ENCODE measurements at regions of chr20 and their contacts with region 1.

Region 1: DNA sequence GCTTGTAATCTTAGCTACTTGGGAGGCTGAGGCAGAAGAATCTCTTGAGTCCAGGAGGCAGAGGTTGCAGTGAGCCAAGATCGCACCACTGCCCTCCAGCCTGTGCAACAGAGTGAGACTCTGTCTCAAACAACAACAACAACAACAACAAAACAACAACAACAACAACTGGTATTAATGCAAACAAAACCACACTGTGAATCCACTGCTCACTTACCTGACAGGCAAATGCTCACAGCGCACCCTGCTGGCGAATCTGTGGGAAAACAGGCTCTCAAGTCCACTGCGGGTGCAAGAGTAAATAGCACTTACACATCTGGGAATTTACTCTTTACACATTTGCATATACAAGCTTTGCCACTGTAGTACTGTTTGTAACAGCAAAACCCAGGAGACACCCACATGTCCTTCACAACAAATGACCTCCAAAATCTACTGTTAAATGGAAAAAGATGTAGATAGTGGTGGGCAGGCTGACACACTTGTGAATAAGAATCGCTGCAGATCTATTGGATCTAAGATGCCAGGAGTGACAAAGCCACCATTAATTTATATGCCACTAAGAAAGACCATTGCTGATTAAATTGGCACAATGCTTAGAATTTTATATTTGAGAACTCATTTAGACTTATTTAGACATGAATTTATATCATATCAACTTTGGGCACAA is 29.3 kb downstream of the NSFL1C start:
- DNase-seq: peak; percentile 71
- ATAC-seq: peak; percentile 81
- H3K4me3 ChIP-seq: no peak overlapping the region
- H3K27ac ChIP-seq: no peak overlapping the region
- H3K4me1 ChIP-seq: no peaks in the 10 kb centered on the region
- H3K27me3 ChIP-seq: no peaks in the 10 kb centered on the region
- CTCF ChIP-seq: peak; percentile 85 to 91 (median 91)
- POLR2A ChIP-seq: no peak
- RAD21 ChIP-seq: peak; percentile 92

Region 2: DNA sequence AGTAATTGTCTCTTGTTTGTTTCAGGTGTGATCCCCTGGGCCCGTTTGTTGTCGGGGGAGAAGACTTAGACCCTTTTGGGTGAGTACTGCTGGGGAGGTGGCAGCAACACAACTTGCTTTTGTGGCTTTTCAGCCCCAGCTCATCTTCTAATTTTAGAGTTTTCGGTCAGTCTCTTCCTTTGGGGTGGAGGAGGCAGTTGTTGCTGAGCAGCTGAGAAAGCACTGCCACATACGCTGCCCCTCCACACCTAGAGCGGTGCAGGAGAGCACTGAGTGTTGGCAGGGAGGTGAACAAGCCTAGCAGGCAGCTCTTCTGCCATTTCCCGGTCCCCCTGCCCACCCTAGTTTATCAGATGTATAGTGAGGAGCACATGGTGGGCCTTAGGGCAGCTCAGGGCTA is 274.3 kb before region 1 on chr20:
- CTCF ChIA-PET with region 1: no interaction called
- POLR2A ChIA-PET with region 1: no interaction called
- RAD21 ChIA-PET with region 1: no interaction called
- intact Hi-C with region 1: no loop called
- DNase-seq: no peak
- ATAC-seq: no peak
- H3K4me3 ChIP-seq: no peak overlapping the region
- H3K27ac ChIP-seq: no peak overlapping the region
- H3K4me1 ChIP-seq: no peaks in the 10 kb centered on the region
- H3K27me3 ChIP-seq: no peaks in the 10 kb centered on the region
- CTCF ChIP-seq: no peak
- POLR2A ChIP-seq: no peak
- RAD21 ChIP-seq: no peak

Region 3: GRCh38 chr20:1196634-1197033 is 240.7 kb before region 1 on chr20:
- CTCF ChIA-PET with region 1: no interaction called
- POLR2A ChIA-PET with region 1: no interaction called
- RAD21 ChIA-PET with region 1: no interaction called
- intact Hi-C with region 1: no loop called
- DNase-seq: no peak
- ATAC-seq: no peak
- H3K4me3 ChIP-seq: no peak overlapping the region
- H3K27ac ChIP-seq: no peak overlapping the region
- H3K4me1 ChIP-seq: no peaks in the 10 kb centered on the region
- H3K27me3 ChIP-seq: no peaks in the 10 kb centered on the region
- CTCF ChIP-seq: no peak
- POLR2A ChIP-seq: no peak
- RAD21 ChIP-seq: no peak

Region 4: DNA sequence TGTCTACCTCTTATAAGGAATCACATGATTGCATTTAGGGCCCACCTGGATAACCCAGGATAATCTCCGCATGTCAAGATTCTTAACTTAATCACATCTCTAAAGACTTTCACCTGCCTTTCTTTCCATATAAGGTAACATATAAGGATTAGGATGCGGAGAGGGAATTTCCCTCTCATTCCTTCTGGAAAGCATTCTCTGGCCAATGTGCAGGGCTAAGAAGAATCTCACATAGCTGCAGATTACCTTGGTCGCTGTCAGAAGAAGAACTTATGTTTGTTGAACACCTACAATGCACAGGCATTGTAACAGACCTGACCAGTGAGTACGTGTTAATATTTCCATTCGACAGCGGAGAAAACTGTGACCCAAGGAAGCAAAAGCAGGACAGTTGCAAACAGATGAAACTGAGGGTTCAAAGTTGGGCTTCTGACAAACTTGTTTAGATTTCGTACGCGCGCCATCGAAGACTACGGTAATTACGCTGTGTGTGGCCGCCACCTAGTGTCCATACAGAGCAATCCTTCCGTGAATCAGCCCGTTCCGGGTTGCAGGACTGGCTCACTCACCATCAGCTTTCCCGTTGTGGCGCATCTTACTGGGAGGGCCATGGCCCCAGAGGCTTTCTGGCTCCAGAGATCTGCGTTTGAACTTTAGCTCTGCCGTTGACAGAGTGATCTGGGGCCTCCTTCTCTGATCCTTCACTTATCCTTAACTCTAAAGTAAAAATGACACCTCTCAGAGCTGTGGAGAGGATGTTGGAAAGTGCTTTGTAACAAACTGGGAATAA is 224.6 kb before region 1 on chr20:
- CTCF ChIA-PET with region 1: no interaction called
- POLR2A ChIA-PET with region 1: no interaction called
- RAD21 ChIA-PET with region 1: interaction called in 1 of 2 experiments, 3 read pairs
- intact Hi-C with region 1: loop called (anchors 1 kb)
- DNase-seq: peak; percentile 66
- ATAC-seq: peak; percentile 99
- H3K4me3 ChIP-seq: peak overlapping the region in 1 of 2 experiments; percentile 28; a peak in 1 of 4 replicates
- H3K27ac ChIP-seq: no peak overlapping the region
- H3K4me1 ChIP-seq: peaks cover 6 to 19% of the 10 kb centered on the region in 2 experiments; a peak in 3 of 4 replicates
- H3K27me3 ChIP-seq: peaks cover 11% of the 10 kb centered on the region
- CTCF ChIP-seq: peak; percentile 71 to 79 (median 77)
- POLR2A ChIP-seq: no peak
- RAD21 ChIP-seq: peak; percentile 81

Region 5: GRCh38 chr20:1313236-1313964 is 124.0 kb before region 1 on chr20:
- CTCF ChIA-PET with region 1: interaction called, 5 read pairs
- POLR2A ChIA-PET with region 1: no interaction called
- RAD21 ChIA-PET with region 1: interaction called in 1 of 2 experiments, 3 read pairs
- intact Hi-C with region 1: loop called (anchors 1 kb)
- DNase-seq: peak; percentile 49
- ATAC-seq: peak; percentile 93
- H3K4me3 ChIP-seq: no peak overlapping the region
- H3K27ac ChIP-seq: no peak overlapping the region
- H3K4me1 ChIP-seq: peaks cover 0 to 3% of the 10 kb centered on the region in 2 experiments; a peak in 1 of 4 replicates
- H3K27me3 ChIP-seq: no peaks in the 10 kb centered on the region
- CTCF ChIP-seq: peak; percentile 93 to 97 (median 96)
- POLR2A ChIP-seq: no peak
- RAD21 ChIP-seq: peak; percentile 93

Region 6: DNA sequence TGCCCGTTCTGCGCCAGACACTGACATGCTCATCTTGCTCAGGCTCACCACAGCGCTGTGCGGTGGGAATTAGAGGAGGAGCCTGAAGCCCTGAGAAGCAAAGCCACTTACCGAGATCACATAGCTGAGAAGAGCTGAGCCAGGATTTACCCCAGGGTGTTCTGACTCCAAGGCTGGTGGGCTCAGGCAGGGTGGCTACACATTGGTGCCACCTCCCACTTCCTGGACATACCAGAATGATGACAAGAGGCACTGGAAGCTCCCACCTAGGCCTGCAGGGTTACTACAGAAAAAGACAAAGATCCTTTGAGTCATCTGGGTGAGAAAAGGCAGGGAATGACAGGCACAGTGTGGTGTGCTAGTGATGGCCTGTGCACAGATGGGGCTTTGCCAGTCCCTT is 20.1 kb before region 1 on chr20:
- CTCF ChIA-PET with region 1: no interaction called
- POLR2A ChIA-PET with region 1: no interaction called
- RAD21 ChIA-PET with region 1: no interaction called
- intact Hi-C with region 1: no loop called
- DNase-seq: peak; percentile 38
- ATAC-seq: peak; percentile 47
- H3K4me3 ChIP-seq: peak overlapping the region in 1 of 2 experiments; percentile 20; a peak in 1 of 4 replicates
- H3K27ac ChIP-seq: peak overlapping the region; percentile 0; the same call in 1 of the 2 replicates
- H3K4me1 ChIP-seq: peaks cover 28 to 41% of the 10 kb centered on the region in 2 experiments
- H3K27me3 ChIP-seq: no peaks in the 10 kb centered on the region
- CTCF ChIP-seq: no peak
- POLR2A ChIP-seq: no peak
- RAD21 ChIP-seq: no peak

Region 7: DNA sequence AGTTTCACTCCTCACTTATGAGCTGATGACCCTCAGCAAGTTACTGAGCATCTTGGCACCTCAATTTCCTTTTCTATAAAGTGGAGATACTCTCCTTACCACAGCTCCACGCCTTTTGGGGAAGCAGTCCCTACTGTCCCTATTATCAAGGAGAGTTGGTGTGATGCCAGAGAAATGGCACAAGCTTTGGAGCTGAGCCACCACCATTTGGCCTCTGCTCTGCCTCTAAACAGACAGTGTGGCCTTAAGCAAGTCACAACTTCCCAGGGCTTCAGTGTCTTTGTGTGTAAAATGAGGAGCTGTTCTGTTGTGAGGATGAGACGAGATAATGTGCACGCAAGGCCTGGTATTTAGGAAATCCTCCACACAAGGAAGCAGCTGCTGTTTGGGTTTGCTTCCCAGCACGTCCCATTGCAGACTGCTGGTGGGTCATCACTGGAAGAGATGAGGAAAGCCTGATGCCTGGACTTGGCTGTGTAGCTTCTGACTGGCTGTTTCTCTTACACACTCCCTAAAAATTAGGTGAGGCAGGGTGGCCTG is 10.8 kb after region 1 on chr20:
- CTCF ChIA-PET with region 1: interaction called, 12 read pairs
- POLR2A ChIA-PET with region 1: no interaction called
- RAD21 ChIA-PET with region 1: no interaction called
- intact Hi-C with region 1: no loop called
- DNase-seq: no peak
- ATAC-seq: no peak
- H3K4me3 ChIP-seq: no peak overlapping the region
- H3K27ac ChIP-seq: no peak overlapping the region
- H3K4me1 ChIP-seq: no peaks in the 10 kb centered on the region
- H3K27me3 ChIP-seq: no peaks in the 10 kb centered on the region
- CTCF ChIP-seq: no peak
- POLR2A ChIP-seq: no peak
- RAD21 ChIP-seq: no peak

Region 8: GRCh38 chr20:1503564-1504227 is 66.3 kb after region 1 on chr20:
- CTCF ChIA-PET with region 1: interaction called, 14 read pairs
- POLR2A ChIA-PET with region 1: no interaction called
- RAD21 ChIA-PET with region 1: interaction called in 1 of 2 experiments, 3 read pairs
- intact Hi-C with region 1: no loop called
- DNase-seq: peak; percentile 91
- ATAC-seq: peak; percentile 97
- H3K4me3 ChIP-seq: no peak overlapping the region
- H3K27ac ChIP-seq: no peak overlapping the region
- H3K4me1 ChIP-seq: peaks cover 4 to 18% of the 10 kb centered on the region in 2 experiments
- H3K27me3 ChIP-seq: no peaks in the 10 kb centered on the region
- CTCF ChIP-seq: peak; percentile 99 to 100 (median 100)
- POLR2A ChIP-seq: no peak
- RAD21 ChIP-seq: peak; percentile 100